ENCODE measurements at regions of chr16 and their contacts with region 1.

Region 1: GRCh38 chr16:2720719-2721633 is 952 bp upstream of the PRSS27 start:
- DNase-seq: peak; percentile 95
- ATAC-seq: peak; percentile 91
- H3K4me3 Mint-ChIP-seq: peak overlapping the region; percentile 77
- H3K27ac Mint-ChIP-seq: peak overlapping the region; percentile 83
- H3K4me1 Mint-ChIP-seq: no peaks in the 10 kb centered on the region
- H3K27me3 Mint-ChIP-seq: peaks cover 9% of the 10 kb centered on the region

Region 2: DNA sequence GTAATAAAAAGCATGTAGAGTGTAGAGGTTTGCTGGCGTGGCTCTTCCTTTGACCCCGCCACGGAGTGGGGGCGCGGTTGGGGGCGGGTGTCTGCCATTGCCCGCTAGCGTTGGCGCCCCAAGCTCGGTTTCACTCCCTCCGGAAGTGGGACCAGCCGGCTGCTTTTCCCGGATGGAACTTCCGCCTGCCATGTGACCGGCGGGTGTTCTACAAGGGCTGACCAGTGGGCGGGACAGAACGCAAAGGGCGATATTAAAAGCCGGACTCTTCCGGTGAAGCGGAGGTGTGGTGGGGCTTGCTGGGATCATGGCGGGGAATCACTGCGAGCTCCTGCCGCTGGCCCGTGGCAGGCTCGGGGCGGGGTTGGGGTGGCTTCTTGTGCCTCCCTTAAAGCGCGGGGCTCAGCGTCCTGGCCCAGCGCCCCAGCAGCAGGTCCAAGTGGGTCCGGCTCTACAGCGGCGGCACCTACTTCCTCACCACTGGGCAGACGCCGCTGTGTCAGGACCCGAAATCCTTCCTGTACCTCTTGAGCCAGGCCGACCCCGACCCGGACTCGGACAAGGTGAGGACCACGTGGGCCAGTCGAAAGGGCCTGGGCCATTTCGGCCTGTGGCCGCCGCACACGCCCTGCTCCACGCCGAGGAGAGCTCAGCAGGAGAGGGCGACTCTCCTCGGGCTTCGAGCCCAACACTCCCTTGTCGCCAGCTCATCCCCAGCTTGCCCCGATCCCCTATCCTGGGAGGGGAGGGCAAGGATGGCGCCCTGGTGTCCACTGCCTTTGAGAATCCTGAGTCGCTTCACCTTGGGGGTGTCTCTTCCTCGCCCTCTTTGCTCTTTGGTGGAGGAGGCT is 117.6 kb before region 1 on chr16:
- CTCF ChIA-PET with region 1: no interaction called
- POLR2A ChIA-PET with region 1: no interaction called
- intact Hi-C with region 1: no loop called
- DNase-seq: peak; percentile 92
- ATAC-seq: peak; percentile 79
- H3K4me3 Mint-ChIP-seq: peak overlapping the region; percentile 94
- H3K27ac Mint-ChIP-seq: peak overlapping the region; percentile 92
- H3K4me1 Mint-ChIP-seq: peaks cover 25% of the 10 kb centered on the region
- H3K27me3 Mint-ChIP-seq: no peaks in the 10 kb centered on the region

Region 3: DNA sequence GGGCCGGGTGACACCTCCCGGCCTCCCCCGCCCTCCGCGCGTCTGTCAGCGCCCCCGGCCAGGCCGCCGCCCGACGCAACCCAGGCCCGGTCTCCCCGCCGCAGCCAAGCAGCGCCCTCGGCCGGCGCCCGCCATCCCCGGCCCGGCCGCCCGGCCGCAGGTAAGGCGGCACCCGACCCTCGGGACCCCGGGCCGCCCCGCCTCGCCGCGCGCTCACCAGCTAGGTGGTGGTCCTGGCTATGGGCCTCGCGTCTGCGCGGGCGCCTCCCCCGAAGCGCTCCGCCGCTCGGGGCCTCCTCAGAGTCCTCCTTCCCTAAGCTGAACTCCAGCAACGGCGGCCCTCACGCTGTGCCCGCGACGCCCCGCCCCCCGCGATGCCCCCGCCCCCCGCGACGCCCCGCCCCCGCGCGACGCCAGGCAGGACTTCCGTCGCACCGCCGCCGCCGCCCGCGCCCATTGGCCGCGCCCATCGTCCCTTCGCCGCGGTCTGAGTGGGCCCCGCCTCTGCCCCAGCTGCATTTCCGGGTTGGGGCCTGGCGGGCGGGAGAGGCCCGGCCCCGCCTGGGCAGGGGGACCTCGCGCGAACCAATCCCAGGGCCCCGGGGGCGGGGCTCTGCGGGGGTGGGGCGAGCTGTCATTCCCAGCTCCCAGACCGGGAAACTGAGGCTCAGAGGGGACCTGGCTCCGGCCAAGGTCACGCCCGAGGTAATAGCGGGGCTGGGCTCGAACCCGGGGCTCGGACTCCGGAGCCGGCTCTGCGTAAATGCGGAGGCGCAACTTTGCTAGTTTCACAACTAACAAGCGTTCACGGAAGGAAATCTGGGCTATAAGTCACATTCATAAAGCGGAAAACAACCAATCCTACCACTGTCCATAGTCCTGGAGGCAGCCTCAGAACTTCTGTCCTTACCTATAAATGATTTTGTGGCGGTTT is 47.6 kb before region 1 on chr16:
- CTCF ChIA-PET with region 1: no interaction called
- POLR2A ChIA-PET with region 1: no interaction called
- intact Hi-C with region 1: loop called in 1 of 2 experiments (anchors 1 kb)
- DNase-seq: peak; percentile 98
- ATAC-seq: peak; percentile 97
- H3K4me3 Mint-ChIP-seq: peak overlapping the region; percentile 73
- H3K27ac Mint-ChIP-seq: peak overlapping the region; percentile 47
- H3K4me1 Mint-ChIP-seq: peaks cover 28% of the 10 kb centered on the region
- H3K27me3 Mint-ChIP-seq: no peaks in the 10 kb centered on the region

Region 4: GRCh38 chr16:2777231-2777902 is 56.4 kb after region 1 on chr16 and contains the start of gene ELOB:
- CTCF ChIA-PET with region 1: no interaction called
- POLR2A ChIA-PET with region 1: no interaction called
- intact Hi-C with region 1: loop called in 1 of 2 experiments (anchors 1 kb)
- DNase-seq: peak; percentile 95
- ATAC-seq: peak; percentile 94
- H3K4me3 Mint-ChIP-seq: peak within 1 kb of the TSS; percentile 95
- H3K27ac Mint-ChIP-seq: peak within 1 kb of the TSS; percentile 96
- H3K4me1 Mint-ChIP-seq: peaks cover 26% of the 10 kb centered on the region
- H3K27me3 Mint-ChIP-seq: no peaks in the 10 kb centered on the region
- total RNA-seq, gene ELOB: 268 to 269 TPM

Region 5: GRCh38 chr16:2883027-2883851 is 162.3 kb after region 1 on chr16 and contains the start of gene FLYWCH2:
- CTCF ChIA-PET with region 1: no interaction called
- POLR2A ChIA-PET with region 1: no interaction called
- intact Hi-C with region 1: loop called in 1 of 2 experiments (anchors 1 kb)
- DNase-seq: peak; percentile 99
- ATAC-seq: peak; percentile 84
- H3K4me3 Mint-ChIP-seq: peak within 1 kb of the TSS; percentile 85
- H3K27ac Mint-ChIP-seq: peak within 1 kb of the TSS; percentile 92
- H3K4me1 Mint-ChIP-seq: peaks cover 10% of the 10 kb centered on the region
- H3K27me3 Mint-ChIP-seq: no peaks in the 10 kb centered on the region
- total RNA-seq, gene FLYWCH2: 16.8 to 17.3 TPM

Region 6: DNA sequence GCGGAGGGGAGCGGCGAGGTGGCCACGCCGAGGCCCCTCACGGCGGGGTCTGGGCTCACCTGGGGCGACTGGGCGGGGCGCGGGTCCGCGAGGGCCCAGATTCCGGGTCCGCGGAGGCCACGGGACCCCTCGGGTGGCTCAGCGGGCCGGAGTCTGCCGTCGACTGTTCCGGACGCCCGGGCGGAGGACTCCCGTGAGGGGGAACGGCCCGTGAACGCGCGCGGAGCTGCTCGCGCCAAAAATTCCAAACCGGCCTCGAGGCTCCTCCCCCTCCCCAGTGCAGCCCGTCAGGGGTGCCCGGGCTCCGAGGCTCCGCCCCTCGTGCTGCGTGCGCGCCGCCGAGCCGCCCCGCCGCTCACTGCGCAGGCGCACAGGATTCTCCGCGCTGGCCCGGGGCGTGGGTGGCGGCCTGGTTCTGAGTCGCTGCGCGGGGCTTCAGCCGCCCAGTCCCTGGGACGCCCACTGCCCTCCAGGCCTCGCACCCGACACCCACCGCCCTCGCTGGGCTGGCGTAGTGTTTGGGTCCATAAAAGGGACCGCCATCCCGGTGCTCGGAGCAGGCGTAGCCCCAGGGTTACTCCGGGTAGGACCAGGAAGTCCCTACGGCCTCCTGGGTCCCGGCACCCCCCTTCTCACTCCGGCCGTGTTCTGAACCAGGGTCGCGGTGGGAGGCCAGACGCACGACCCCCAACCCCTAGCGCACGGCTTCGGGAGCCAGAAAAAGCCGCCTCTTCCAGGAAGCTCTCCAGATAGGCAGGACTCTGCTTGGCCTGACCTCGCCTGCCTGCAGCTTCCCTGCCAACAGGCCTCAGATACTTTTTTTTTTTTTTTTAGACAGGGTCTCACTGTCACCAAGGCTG is 259.5 kb after region 1 on chr16 and contains the start of gene PKMYT1:
- CTCF ChIA-PET with region 1: no interaction called
- POLR2A ChIA-PET with region 1: no interaction called
- intact Hi-C with region 1: loop called in 1 of 2 experiments (anchors 1 kb)
- DNase-seq: peak; percentile 97
- ATAC-seq: peak; percentile 91
- H3K4me3 Mint-ChIP-seq: peak within 1 kb of the TSS; percentile 87
- H3K27ac Mint-ChIP-seq: peak within 1 kb of the TSS; percentile 84
- H3K4me1 Mint-ChIP-seq: peaks cover 6% of the 10 kb centered on the region
- H3K27me3 Mint-ChIP-seq: peaks cover 2% of the 10 kb centered on the region
- total RNA-seq, gene PKMYT1: 101 to 117 TPM